Sciatic nerve (tissue), 2 donors: ENCODE measurements at regions of chr12 and their contacts with region 1.

Region 1: GRCh38 chr12:40921563-40922163 is 229.4 kb downstream of the CNTN1 start:
- DNase-seq: no peak
- ATAC-seq: peak; percentile 67

Region 2: DNA sequence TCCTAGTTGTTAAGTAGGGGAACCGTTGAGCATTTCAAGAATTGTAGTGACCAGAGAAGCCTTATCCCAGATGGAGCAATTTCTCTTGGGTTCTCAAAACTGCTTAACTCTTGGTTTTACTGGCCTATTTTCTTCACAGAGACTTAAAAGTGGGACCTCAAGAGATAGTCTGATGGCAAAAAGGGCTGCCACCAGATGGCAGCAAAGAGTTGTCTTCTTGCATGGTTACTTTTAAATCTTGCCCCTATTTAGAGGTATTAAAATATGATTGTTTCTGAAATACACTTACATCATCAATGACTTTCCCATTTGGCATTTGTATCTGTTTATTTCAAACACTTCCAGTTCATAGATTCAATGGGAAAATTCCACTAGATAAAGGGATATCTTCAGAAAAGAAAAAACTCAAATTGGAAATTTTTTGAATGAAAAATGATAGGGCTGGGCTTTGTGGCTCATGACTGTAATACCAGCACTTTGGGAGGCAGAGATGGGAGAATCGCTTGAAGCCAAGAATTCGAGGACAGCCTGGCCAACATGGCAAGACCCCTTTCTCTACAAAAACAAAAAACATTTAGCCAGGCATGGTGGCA is 299.3 kb before region 1 on chr12:
- intact Hi-C with region 1: loop called (anchors 5 kb)
- DNase-seq: peak; percentile 84
- ATAC-seq: peak; percentile 64